ENCODE measurements at regions of chr12 and their contacts with region 1.

Region 1: DNA sequence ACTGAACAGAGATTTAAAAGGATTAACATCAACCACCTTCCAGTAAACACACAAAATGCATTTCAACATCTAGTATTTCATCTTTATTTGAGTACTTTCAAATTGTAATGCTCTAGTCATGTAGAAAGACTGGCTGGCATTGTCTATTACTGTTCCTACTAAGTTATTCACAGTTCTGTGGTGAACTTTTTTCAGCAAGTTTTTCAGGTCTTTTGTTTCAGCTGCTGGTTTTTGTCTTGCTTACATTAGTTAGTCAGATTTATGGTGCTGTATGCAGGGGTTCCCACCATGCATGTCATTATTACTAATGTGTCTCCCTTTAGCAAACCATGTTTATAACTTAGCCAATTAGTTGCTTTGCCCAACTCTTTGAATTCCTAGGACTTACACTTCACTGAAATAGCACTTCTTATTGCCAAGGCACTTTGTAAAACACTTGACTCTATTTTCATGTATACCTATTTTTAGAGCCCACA is 253.4 kb upstream of the KITLG start:
- DNase-seq: no peak
- ATAC-seq: no peak
- H3K4me3 ChIP-seq: no peak overlapping the region
- H3K27ac ChIP-seq: no peak overlapping the region
- H3K4me1 ChIP-seq: no peaks in the 10 kb centered on the region
- H3K27me3 ChIP-seq: peaks cover 0 to 2% of the 10 kb centered on the region in 2 donors

Region 2: DNA sequence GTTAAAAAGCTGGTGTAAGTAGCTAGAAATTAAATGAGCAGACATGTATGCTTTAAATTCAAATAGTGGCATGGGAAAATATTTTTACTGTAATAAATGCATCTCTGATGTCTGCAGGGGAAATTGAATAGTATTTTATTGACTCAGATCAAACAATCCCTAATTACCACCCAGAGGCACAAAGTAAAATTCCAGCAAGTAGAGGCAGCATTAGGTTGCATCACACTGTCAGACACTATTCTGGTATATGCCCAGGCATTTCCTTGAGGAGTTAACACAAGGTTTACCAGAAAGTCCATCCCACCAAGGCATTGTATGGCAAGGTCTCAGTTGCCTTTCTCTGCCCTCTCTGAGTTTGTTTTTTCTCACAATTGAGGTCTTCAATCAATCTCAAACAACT is 51.8 kb before region 1 on chr12:
- intact Hi-C with region 1: no loop called
- DNase-seq: no peak
- ATAC-seq: no peak
- H3K4me3 ChIP-seq: no peak overlapping the region
- H3K27ac ChIP-seq: no peak overlapping the region
- H3K4me1 ChIP-seq: no peaks in the 10 kb centered on the region
- H3K27me3 ChIP-seq: no peaks in the 10 kb centered on the region

Region 3: DNA sequence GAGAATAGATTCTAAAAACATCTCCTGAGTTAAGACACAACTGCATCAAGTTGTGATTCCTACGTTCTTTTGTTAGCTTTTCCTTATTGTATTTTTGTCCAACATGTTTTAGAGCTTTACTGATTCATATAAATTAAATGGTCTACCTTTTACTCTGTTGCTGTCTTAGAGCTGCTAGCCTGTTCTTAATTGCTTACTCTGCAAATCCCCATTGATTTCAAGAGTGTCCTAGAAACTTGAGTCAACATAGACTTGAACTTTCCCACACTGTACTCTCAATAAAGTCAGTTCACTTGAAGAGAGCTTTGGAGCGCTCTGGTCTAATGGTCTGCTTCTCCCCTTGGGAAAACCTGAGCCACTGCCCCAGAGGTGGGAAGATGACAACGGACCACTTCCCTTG is 1777.4 kb after region 1 on chr12:
- intact Hi-C with region 1: loop called in 1 of 2 experiments (anchors 10 kb)
- DNase-seq: no peak
- ATAC-seq: no peak
- H3K4me3 ChIP-seq: no peak overlapping the region
- H3K27ac ChIP-seq: no peak overlapping the region
- H3K4me1 ChIP-seq: no peaks in the 10 kb centered on the region
- H3K27me3 ChIP-seq: no peaks in the 10 kb centered on the region